ENCODE measurements at regions of chr6 and their contacts with region 1.

Region 1: DNA sequence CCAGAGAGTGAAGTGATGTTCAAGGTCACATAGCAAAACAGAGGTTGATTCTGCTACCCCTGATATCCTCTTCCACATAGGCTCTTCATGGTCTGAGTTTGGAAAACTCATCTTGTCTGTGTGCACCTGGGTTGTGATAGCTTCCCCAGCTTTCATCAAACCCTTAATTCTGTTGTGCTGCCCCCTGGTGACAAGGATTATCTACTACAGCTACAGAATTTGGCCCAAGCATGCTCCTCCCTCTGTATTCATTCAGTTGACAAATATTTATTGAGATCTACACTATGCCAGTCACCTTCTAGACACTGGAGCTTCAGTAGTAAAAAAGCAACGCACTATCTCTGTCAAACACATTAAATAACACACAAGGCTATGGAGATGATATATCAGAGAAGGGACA is 50.4 kb downstream of the SMPDL3A start:
- DNase-seq: peak; percentile 64
- H3K4me3 ChIP-seq: no peak overlapping the region
- H3K27ac ChIP-seq: no peak overlapping the region
- H3K4me1 ChIP-seq: no peaks in the 10 kb centered on the region
- H3K27me3 ChIP-seq: no peaks in the 10 kb centered on the region
- CTCF ChIP-seq: peak; percentile 49 to 77 (median 71)
- POLR2A ChIP-seq: no peak

Region 2: DNA sequence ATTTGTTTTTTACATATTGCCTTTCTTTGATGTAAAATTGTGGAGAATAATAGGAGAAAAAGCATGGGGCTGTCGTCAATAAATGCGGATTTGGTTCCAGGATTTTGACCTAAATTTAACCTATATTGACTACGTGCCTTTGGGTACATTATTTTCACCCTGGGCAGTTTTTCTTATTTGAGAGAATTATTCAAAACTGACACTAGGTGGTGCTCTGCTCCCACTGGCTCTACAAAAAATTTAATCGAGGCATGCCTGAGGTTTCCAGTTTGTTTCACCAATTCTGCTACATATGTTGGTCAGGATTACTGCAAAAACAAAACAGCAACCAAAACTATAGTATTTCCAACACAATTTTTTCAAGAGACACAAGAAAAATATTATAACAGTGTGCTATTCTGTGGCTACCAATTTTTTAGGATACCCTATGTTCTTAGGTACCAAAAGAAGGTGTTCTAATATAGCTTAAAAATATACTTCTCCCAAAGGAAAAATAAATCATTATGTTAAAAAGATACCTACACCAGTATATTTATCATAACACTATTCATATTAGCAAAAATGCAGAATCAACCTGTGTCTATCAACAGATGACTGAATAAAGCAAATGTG is 108.6 kb before region 1 on chr6:
- intact Hi-C with region 1: loop called (anchors 2 kb)
- DNase-seq: no peak
- H3K4me3 ChIP-seq: no peak overlapping the region
- H3K27ac ChIP-seq: no peak overlapping the region
- H3K4me1 ChIP-seq: no peaks in the 10 kb centered on the region
- H3K27me3 ChIP-seq: no peaks in the 10 kb centered on the region
- CTCF ChIP-seq: peak; percentile 49 to 73 (median 70)
- POLR2A ChIP-seq: no peak

Region 3: GRCh38 chr6:122758927-122759334 is 80.5 kb before region 1 on chr6:
- intact Hi-C with region 1: no loop called
- DNase-seq: no peak
- H3K4me3 ChIP-seq: no peak overlapping the region
- H3K27ac ChIP-seq: no peak overlapping the region
- H3K4me1 ChIP-seq: no peaks in the 10 kb centered on the region
- H3K27me3 ChIP-seq: no peaks in the 10 kb centered on the region
- CTCF ChIP-seq: no peak
- POLR2A ChIP-seq: no peak

Region 4: GRCh38 chr6:123150076-123150475 is 310.6 kb after region 1 on chr6:
- intact Hi-C with region 1: no loop called
- DNase-seq: no peak
- H3K4me3 ChIP-seq: no peak overlapping the region
- H3K27ac ChIP-seq: no peak overlapping the region
- H3K4me1 ChIP-seq: no peaks in the 10 kb centered on the region
- H3K27me3 ChIP-seq: no peaks in the 10 kb centered on the region
- CTCF ChIP-seq: no peak
- POLR2A ChIP-seq: no peak

Measured in prostate gland (tissue), 2 donors.